ENCODE measurements at regions of chr10 and their contacts with region 1.

Region 1: DNA sequence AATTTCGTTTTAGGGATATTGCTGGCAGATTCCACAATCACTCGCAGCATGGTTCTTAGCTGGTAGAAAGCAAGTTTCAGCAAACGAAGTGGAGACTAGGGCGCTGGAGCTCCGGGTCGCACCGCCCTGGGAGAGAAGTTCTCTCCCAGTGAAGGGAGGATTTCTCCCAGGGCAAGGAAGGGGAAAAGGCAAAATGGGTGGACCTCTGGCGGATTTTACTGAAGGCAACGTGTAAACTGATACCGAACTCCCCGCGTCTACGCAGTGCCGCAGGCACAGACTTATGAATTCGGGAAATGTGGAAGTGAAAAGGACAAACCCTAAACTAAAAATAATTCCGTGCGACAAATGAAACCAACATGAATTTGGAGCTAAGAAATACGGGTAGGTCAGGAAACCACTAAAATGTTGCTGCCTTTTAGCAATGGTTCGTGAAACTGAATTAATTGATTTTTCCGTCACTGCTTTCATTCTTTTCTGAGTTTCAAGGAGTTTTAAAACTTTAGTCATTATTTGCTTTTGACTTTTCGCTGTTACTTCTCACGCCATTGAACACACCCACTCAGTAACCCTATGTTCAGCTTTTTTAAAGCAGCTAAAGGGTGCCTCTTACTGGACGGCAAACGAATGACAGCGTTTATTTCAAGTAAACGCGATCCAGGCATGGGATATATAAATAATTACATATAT is at the start of gene MYOF:
- H3K4me3 ChIP-seq: peak within 1 kb of the TSS; percentile 62
- H3K27ac ChIP-seq: no peak within 1 kb of the TSS
- H3K4me1 ChIP-seq: no peaks in the 10 kb centered on the region
- CTCF ChIP-seq: no peak; the same call in 1 of the 2 replicates

Region 2: DNA sequence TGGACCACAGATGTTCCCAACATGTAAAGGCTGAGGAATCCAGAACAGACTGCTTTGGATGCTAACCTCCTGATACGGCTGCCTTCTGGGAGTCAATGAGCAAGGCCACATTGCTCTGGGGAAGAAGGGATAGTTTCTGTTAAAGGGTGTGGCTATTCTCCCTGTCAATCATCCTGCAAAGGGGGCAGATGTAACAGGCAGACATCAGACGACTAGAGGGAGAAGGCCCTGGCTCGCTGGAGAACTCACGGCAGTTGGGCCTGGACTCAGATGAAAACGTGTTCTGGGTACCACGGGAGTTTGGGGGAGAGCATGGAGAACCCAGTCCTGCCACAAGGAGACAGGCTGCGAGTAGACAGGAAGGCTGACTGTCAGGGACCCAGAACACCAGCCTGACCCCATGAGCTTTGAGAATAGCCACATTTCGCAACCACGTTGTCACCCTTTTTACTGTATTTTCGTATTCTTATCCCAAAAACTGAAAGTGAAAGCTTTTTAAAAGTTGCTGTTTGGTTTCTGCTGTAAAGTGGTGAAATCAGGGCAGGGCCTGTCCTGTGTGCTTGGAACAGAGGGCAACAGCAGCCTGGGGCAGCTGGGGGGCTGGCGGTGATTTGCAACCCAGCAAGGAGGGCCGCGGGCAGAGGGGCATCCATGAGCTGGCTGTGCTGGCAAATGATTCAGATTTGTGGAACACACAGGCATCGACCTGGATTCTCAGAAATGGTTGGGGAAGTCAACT is 95.5 kb before region 1 on chr10:
- CTCF ChIA-PET with region 1: interaction called, 12 read pairs
- POLR2A ChIA-PET with region 1: no interaction called
- H3K4me3 ChIP-seq: no peak overlapping the region
- H3K27ac ChIP-seq: no peak overlapping the region
- H3K4me1 ChIP-seq: no peaks in the 10 kb centered on the region
- CTCF ChIP-seq: no peak

Region 3: GRCh38 chr10:93437088-93437945 is 45.0 kb before region 1 on chr10:
- CTCF ChIA-PET with region 1: interaction called, 19 read pairs
- POLR2A ChIA-PET with region 1: interaction called, 7 read pairs
- H3K4me3 ChIP-seq: peak overlapping the region; percentile 6; the same call in 1 of the 2 replicates
- H3K27ac ChIP-seq: 0 out of 2 replicates have a peak overlapping the region, but pooled peaks have one; percentile 8
- H3K4me1 ChIP-seq: peaks cover 10% of the 10 kb centered on the region
- CTCF ChIP-seq: no peak

Region 4: DNA sequence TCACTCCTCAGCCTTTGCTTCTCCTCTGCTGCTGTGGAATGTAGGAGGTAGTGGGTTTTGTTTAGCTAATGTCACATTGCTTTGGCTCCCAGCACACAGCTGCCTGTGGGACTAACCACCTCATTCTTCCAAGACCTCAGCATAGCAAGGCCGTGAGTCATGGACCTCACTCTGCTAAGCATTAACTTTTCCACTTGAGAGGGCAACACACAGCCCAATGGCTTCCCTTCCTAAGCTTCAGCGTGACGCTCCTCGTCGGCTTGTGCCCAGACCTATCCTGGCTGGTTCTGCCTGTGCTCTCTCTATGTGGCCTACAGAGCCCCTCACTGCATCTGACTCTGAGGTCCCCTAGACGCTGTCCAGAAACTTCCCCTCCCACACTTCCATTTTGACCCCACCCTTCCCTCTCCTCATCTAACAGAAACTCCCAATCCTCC is 23.5 kb before region 1 on chr10:
- CTCF ChIA-PET with region 1: interaction called, 25 read pairs
- POLR2A ChIA-PET with region 1: interaction called, 4 read pairs
- H3K4me3 ChIP-seq: no peak overlapping the region
- H3K27ac ChIP-seq: peak overlapping the region; percentile 2; the same call in 1 of the 2 replicates
- H3K4me1 ChIP-seq: no peaks in the 10 kb centered on the region
- CTCF ChIP-seq: no peak

Region 5: DNA sequence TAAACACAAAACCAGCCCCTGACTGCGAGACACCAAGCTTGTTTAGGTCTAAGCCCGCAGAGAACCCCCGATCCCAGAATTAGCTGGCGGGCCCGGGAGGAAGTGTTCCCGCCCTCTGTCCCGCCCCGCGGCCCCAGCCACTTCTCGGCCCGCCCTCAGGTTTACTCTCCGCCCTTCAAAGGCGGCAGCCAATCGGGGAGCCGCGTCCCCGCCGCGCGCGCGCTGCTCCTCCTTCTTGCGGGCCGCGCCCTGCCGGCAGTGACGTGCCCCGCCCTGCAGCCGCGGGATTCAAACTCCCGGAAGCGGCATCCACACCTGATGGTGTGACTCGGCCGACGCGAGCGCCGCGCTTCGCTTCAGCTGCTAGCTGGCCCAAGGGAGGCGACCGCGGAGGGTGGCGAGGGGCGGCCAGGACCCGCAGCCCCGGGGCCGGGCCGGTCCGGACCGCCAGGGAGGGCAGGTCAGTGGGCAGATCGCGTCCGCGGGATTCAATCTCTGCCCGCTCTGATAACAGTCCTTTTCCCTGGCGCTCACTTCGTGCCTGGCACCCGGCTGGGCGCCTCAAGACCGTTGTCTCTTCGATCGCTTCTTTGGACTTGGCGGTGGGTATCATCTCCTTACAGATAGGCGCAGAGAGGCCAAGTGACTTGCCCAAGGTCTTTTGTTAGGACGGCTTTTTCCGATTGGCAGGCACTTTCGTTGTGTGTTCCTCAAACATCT is 14.2 kb after region 1 on chr10 and contains the start of gene CEP55:
- CTCF ChIA-PET with region 1: interaction called, 17 read pairs
- POLR2A ChIA-PET with region 1: interaction called, 15 read pairs
- H3K4me3 ChIP-seq: peak within 1 kb of the TSS; percentile 72
- H3K27ac ChIP-seq: peak within 1 kb of the TSS; percentile 87
- H3K4me1 ChIP-seq: no peaks in the 10 kb centered on the region; the same call in 1 of the 2 replicates
- CTCF ChIP-seq: 0 out of 2 replicates have a peak, but pooled peaks have one; percentile 14